Activated CD4-positive, alpha-beta T cell treated with anti-CD3 and anti-CD28 coated beads, Interleukin-2, amount 10 ng/mL, durations not matched to agents 24 days and 14 days (primary cell): ENCODE measurements at regions of chr5 and their contacts with region 1.

Region 1: DNA sequence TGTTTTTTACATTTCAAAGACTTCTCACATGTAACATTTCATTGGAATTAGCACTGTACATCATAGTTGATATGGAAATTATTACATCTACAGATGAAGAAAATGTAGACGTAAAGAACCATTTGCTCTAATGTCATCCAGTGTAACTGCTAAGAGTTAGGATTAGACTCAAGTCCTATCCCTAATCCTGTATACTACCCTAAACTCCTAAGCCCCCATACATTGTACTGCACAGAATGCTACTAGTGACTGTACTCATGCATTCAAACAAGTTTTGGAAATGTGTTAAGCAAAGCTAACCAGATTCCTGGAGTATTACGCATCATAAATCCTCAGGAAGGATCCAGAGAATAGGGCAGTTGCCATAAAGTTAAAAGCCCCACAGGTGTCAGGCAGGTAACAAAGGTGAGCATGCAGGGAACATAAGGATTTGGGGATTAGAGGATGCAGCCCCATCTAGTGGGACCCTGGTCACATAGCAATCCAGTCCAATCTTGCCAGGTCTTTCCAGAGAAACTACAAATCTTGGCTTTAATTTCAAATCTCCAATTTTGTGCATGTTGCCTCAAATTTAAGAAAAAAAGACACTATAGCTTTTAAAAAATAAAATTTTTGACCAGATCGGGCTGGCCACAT is 32.0 kb downstream of the HAVCR1 start:
- DNase-seq: peak; percentile 71
- H3K4me3 Mint-ChIP-seq: peak overlapping the region; percentile 26
- H3K27ac Mint-ChIP-seq: peak overlapping the region; percentile 91
- H3K4me1 Mint-ChIP-seq: peaks cover 81% of the 10 kb centered on the region
- H3K27me3 Mint-ChIP-seq: peaks cover 2% of the 10 kb centered on the region

Region 2: DNA sequence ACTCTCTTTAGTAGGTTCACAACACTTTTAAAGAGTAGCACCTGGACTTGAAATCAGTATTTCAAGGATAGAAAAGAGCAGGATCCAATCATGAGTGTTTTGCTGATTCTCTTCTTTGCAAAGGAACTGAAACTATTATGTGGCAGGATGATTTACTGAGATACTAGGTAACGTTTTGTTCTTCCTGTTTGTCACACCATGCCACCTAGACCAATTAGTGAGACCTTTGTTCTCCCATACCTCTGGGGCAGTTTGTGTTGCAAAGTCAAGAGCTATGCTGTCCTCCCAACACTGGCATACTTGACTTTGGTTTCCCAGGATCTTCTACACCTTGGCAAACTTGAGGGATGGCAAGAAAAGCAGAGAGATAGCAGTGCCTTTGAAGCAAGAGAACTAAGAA is 133.4 kb before region 1 on chr5:
- intact Hi-C with region 1: loop called (anchors 1 kb)
- DNase-seq: peak; percentile 65
- H3K4me3 Mint-ChIP-seq: peak overlapping the region; percentile 59
- H3K27ac Mint-ChIP-seq: peak overlapping the region; percentile 88
- H3K4me1 Mint-ChIP-seq: peaks cover 42% of the 10 kb centered on the region
- H3K27me3 Mint-ChIP-seq: no peaks in the 10 kb centered on the region

Region 3: DNA sequence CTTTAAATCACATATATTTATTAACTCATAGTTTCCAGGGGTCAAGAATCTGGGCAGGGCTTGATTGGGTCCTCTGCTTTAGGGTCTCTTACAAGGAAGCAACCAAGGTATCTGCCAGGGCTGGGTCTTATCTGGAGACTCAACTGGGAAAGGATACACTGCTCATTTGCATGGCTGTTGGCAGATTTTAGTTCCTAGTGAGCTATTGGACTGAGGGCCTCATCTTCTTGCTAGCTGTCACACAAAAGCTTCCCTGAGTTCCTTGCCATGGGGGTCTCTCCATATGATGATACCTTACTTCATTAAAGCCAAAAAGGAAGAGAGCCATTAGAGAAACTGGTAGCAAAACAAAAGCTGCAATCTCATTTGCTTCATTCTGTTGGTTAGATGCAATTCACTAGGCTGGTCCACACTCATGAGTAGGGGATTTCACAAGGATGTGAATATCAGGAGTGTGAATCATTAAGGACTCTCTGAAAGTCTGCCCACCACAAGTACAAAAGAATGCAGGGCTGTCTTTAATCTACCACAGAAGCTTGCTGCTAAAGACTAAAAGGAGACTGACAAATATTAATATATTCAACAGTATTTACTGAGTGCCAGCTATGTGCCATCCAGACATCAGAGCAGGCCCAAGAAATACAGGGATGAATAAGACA is 21.9 kb before region 1 on chr5:
- intact Hi-C with region 1: loop called (anchors 1 kb)
- DNase-seq: no peak
- H3K4me3 Mint-ChIP-seq: no peak overlapping the region
- H3K27ac Mint-ChIP-seq: peak overlapping the region; percentile 76
- H3K4me1 Mint-ChIP-seq: peaks cover 21% of the 10 kb centered on the region
- H3K27me3 Mint-ChIP-seq: no peaks in the 10 kb centered on the region

Region 4: DNA sequence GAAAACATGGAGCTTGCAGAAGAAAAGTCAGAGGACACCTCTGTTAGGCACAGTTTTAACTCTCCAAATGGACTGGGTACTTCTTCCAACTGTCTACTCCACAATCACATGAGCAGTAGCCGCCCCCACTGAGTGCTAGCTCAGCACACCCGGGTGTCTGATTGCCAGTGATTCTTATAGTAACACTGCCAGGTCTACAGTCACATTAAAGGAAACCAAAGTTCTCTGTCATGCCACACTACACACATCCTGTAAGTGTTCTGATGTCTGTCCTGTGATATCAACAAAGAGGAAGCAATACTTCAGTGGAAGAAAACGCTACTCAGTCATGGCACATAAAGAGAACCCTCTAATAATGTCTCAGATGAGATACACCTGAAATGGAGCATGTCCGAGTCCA is 82.1 kb after region 1 on chr5 and contains the start of gene HAVCR2:
- intact Hi-C with region 1: loop called (anchors 1 kb)
- DNase-seq: peak; percentile 90
- H3K4me3 Mint-ChIP-seq: peak within 1 kb of the TSS; percentile 97
- H3K27ac Mint-ChIP-seq: peak within 1 kb of the TSS; percentile 98
- H3K4me1 Mint-ChIP-seq: peaks cover 58% of the 10 kb centered on the region
- H3K27me3 Mint-ChIP-seq: no peaks in the 10 kb centered on the region
- total RNA-seq, gene HAVCR2: 70.0 and 73.1 TPM in 2 replicates

Region 5: DNA sequence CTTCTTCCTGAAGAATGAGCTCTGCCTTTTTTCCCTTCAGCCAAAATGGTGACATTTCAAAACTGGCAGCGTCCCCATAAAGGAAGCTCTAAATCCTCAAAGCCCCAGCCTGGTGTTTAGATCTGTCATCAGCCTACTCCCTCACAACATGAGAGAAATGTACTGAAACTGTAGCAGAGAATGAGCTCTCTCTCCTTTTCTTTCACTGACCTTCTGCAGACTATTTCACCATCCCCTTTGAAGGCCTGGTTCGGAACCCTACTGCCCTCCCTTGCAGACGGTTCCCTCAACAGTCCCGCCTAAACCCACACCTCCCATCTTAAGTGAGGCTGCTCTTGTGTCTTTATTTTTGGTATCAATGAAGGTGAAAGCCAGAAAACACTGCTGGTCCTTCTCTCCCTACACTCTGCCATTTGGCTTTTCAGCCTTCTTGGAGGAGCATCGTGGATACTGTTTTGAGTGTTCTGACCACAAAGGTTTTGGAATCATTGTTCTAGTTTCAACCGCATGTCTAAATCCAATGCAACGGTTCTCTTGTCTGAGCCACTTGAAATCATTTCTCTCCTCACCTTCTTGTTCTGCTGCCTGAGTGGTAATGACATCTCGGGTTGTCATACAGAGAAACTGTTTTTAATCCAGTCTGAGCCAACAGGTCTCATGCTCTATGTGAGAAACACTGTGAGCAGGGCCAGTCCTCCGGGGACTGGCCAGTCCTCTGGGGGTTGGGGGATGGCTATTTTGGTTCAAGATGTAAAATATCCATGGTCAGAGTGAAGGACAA is 192.8 kb after region 1 on chr5:
- intact Hi-C with region 1: loop called (anchors 5 kb)
- DNase-seq: peak; percentile 80
- H3K4me3 Mint-ChIP-seq: peak overlapping the region; percentile 78
- H3K27ac Mint-ChIP-seq: peak overlapping the region; percentile 93
- H3K4me1 Mint-ChIP-seq: peaks cover 76% of the 10 kb centered on the region
- H3K27me3 Mint-ChIP-seq: no peaks in the 10 kb centered on the region

Region 6: GRCh38 chr5:157603333-157604190 is 576.7 kb after region 1 on chr5:
- intact Hi-C with region 1: loop called (anchors 5 kb)
- DNase-seq: peak; percentile 92
- H3K4me3 Mint-ChIP-seq: peak overlapping the region; percentile 65
- H3K27ac Mint-ChIP-seq: peak overlapping the region; percentile 88
- H3K4me1 Mint-ChIP-seq: peaks cover 73% of the 10 kb centered on the region
- H3K27me3 Mint-ChIP-seq: no peaks in the 10 kb centered on the region